Activated naive CD8-positive, alpha-beta T cell treated with anti-CD3 and anti-CD28 coated beads, Interleukin-2, amount 10 ng/mL, durations not matched to agents 7 days and 5 days (primary cell): ENCODE measurements at regions of chr15 and their contacts with region 1.

Region 1: DNA sequence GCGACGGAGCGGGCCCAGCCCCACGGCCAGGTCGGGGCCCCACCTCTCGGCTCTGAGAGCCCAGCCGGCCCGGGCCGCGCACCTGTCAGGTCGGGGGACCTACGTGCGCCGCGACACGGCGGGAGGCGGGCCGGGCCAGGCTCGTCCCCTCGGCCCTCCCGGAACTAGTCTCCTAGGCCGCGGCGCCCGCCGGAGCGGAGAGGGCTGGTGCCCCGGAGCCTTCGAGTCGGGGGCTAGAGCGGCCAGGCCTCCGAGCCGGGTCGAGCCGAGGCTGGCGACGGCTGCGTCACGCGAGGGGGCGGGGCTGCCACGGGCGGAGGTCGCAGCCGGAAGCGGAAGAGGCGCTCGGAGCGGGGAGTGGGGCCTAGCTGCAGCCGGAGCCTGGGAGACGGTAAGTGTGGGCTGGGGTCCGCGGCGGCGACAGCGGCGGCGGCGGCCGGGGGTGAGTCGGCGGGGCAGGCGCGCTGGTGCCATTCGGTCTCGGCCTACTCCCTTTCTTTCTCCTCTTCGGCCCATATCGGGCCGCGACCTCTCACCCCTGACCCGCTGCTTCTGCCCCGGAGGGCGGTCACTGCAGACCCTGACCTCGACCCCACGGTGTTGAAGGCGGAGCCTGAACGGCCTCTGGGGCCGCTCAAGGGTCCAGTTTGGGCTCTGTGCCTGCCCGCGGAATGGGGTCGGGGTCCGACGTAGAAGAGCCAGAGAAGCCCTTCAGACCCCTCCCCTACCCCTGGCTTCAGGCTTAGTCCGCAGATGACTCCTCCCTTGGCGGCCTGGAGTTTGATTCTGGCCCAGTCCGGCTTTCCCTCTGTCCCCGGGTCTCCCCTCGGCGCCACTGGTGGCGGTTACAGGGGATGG is at the start of gene CLK3:
- DNase-seq: peak; percentile 99
- ATAC-seq: peak; percentile 89
- H3K4me3 Mint-ChIP-seq: peak within 1 kb of the TSS; percentile 96
- H3K27ac Mint-ChIP-seq: peak within 1 kb of the TSS; percentile 95
- H3K4me1 Mint-ChIP-seq: peaks cover 28% of the 10 kb centered on the region
- H3K27me3 Mint-ChIP-seq: no peaks in the 10 kb centered on the region
- total RNA-seq, gene CLK3: 134 to 148 TPM

Region 2: DNA sequence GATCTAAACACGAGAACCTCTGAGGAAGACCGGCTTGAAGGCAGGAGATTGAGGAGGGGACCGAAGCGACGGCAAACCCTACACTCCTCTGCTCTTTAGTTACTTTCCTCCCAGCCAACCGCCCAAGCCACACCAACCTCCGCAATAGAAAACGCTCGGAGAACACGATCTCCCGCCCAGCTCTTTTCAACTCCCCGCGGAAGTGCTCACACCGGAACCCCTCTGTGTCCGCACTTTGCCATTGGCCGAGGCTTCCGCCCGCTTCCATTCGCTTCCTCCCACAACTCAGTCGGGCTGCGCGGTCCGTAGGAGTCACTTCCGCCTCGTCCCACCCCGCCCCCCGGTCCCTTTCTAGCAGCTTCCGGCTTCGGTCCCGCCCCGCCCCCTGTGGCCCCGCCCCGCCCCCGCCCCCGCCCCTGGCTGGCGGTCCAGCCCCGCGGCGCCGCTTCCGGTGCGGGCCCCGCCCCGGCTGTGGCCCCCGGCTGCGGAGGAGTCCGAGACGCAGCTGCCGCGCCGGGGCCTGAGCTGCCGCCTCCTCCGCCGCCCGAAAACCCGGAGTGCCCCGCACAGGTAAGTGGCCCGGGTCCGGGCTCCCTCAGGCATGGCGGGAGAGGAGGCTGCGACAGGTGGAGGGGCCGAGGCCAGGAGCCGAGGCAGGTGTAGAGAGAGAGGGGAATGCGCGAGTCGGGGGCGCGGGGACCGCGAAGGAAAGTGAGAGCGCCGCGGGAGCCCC is 74.8 kb before region 1 on chr15 and contains the start of gene ARID3B:
- POLR2A ChIA-PET with region 1: interaction called, 47 read pairs
- DNase-seq: peak; percentile 88
- ATAC-seq: peak; percentile 92
- H3K4me3 Mint-ChIP-seq: peak within 1 kb of the TSS; percentile 94
- H3K27ac Mint-ChIP-seq: peak within 1 kb of the TSS; percentile 97
- H3K4me1 Mint-ChIP-seq: peaks cover 42% of the 10 kb centered on the region
- H3K27me3 Mint-ChIP-seq: no peaks in the 10 kb centered on the region
- total RNA-seq, gene ARID3B: 39.4 to 43.0 TPM

Region 3: DNA sequence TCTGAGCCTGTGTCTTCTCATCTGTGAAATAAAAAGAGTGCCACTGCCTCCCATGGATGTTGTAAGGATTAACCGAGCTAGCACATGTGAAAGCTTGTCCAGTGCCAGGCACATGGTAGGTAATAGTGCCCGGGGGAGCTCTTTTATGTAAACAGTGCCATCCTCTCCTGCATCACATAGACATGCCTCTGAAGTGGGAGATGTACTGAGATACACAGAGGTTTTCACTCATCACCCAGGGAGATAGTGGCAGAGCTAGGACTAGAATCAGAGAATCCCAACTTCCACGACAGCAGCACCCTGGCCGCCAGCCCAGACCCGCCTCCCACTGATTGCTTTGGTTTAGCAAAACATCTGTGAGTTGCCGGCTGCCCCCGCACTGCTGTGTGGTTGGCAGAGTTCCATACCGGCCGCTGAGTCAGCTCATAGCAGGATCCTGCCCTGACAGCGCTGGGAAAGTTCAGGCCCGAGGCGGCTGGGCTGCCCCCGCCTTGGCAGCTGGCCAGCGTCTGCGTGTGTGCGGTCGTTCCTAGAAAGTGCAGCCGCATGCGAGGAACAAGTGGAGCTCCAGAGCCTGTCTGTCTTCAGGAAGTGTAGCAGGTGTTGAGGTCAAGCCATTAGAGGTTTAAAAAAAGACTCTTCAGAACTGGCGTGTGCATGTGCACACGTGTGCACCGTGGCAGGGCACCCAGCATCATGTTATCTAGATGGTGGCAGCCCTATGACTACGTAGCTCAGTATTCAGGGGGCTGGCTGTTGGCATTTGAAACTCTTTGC is 69.7 kb before region 1 on chr15:
- POLR2A ChIA-PET with region 1: interaction called, 47 read pairs
- DNase-seq: peak; percentile 89
- ATAC-seq: peak; percentile 80
- H3K4me3 Mint-ChIP-seq: peak overlapping the region; percentile 75
- H3K27ac Mint-ChIP-seq: peak overlapping the region; percentile 44
- H3K4me1 Mint-ChIP-seq: peaks cover 64% of the 10 kb centered on the region
- H3K27me3 Mint-ChIP-seq: no peaks in the 10 kb centered on the region

Region 4: GRCh38 chr15:74598126-74598842 is 17.5 kb before region 1 on chr15:
- POLR2A ChIA-PET with region 1: interaction called, 49 read pairs
- DNase-seq: peak; percentile 90
- ATAC-seq: peak; percentile 96
- H3K4me3 Mint-ChIP-seq: peak overlapping the region; percentile 96
- H3K27ac Mint-ChIP-seq: peak overlapping the region; percentile 95
- H3K4me1 Mint-ChIP-seq: peaks cover 14% of the 10 kb centered on the region
- H3K27me3 Mint-ChIP-seq: no peaks in the 10 kb centered on the region

Region 5: GRCh38 chr15:74631408-74632247 is 15.9 kb after region 1 on chr15:
- POLR2A ChIA-PET with region 1: interaction called, 18 read pairs
- DNase-seq: peak; percentile 72
- ATAC-seq: peak; percentile 54
- H3K4me3 Mint-ChIP-seq: no peak overlapping the region
- H3K27ac Mint-ChIP-seq: peak overlapping the region; percentile 38
- H3K4me1 Mint-ChIP-seq: peaks cover 23% of the 10 kb centered on the region
- H3K27me3 Mint-ChIP-seq: no peaks in the 10 kb centered on the region